Heart right ventricle (tissue), 16 donors: ENCODE measurements at regions of chr5 and their contacts with region 1.

Region 1: GRCh38 chr5:119274767-119275130 is 81.1 kb upstream of the TNFAIP8 start:
- DNase-seq: no peak
- ATAC-seq: no peak
- H3K4me3 ChIP-seq: no peak overlapping the region
- H3K27ac ChIP-seq: peak overlapping the region in 1 of 10 donors; percentile 93
- H3K4me1 ChIP-seq: peaks cover 0 to 91% (median 21%) of the 10 kb centered on the region in 9 donors
- H3K27me3 ChIP-seq: no peaks in the 10 kb centered on the region
- CTCF ChIP-seq: no peak

Region 2: DNA sequence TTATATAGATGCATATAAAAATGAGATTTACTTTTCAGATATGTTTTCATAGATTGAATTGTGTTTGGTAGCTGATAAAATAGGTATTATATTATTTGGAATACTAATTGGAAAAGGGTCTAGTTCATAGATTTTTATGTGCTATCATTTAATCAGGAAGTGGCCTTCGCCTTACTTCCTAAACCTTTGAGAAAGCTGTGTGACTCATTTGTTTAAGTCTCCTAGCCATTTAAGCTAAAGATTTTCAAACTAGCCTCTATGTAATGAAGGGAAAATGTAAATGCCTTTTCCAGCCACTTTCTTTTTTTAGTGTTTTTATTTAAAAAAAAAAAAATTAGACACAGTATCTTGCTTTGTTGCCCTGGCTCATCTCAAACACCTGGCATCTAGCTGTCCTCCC is 106.3 kb before region 1 on chr5:
- intact Hi-C with region 1: no loop called
- DNase-seq: no peak
- ATAC-seq: no peak
- H3K4me3 ChIP-seq: no peak overlapping the region
- H3K27ac ChIP-seq: no peak overlapping the region
- H3K4me1 ChIP-seq: peaks cover 0 to 8% (median 0%) of the 10 kb centered on the region in 9 donors
- H3K27me3 ChIP-seq: no peaks in the 10 kb centered on the region
- CTCF ChIP-seq: no peak

Region 3: GRCh38 chr5:119255571-119256356 is 19.0 kb before region 1 on chr5:
- intact Hi-C with region 1: no loop called
- DNase-seq: no peak
- ATAC-seq: peak in 1 of 8 donors; percentile 34
- H3K4me3 ChIP-seq: no peak overlapping the region
- H3K27ac ChIP-seq: no peak overlapping the region
- H3K4me1 ChIP-seq: no peaks in the 10 kb centered on the region
- H3K27me3 ChIP-seq: no peaks in the 10 kb centered on the region
- CTCF ChIP-seq: peak in 2 of 9 donors; percentile 19 to 26

Region 4: GRCh38 chr5:119315516-119315949 is 40.8 kb after region 1 on chr5:
- intact Hi-C with region 1: loop called in 3 of 10 experiments (anchors 5 kb)
- DNase-seq: no peak
- ATAC-seq: peak; percentile 34 to 89 (median 65)
- H3K4me3 ChIP-seq: no peak overlapping the region
- H3K27ac ChIP-seq: peak overlapping the region in 1 of 10 donors; percentile 12
- H3K4me1 ChIP-seq: peaks cover 0 to 57% (median 0%) of the 10 kb centered on the region in 9 donors
- H3K27me3 ChIP-seq: no peaks in the 10 kb centered on the region
- CTCF ChIP-seq: peak in 5 of 9 donors; percentile 29 to 52 (median 46)

Region 5: GRCh38 chr5:119328753-119329602 is 54.2 kb after region 1 on chr5:
- intact Hi-C with region 1: loop called in 6 of 10 experiments (anchors 2 to 10 kb)
- DNase-seq: no peak
- ATAC-seq: no peak
- H3K4me3 ChIP-seq: no peak overlapping the region
- H3K27ac ChIP-seq: peak overlapping the region in 1 of 10 donors; percentile 84
- H3K4me1 ChIP-seq: peaks cover 0 to 98% (median 6%) of the 10 kb centered on the region in 9 donors
- H3K27me3 ChIP-seq: no peaks in the 10 kb centered on the region
- CTCF ChIP-seq: no peak